Activated CD8-positive, alpha-beta T cell treated with anti-CD3 and anti-CD28 coated beads for 36 hours (primary cell): ENCODE measurements at regions of chr18 and their contacts with region 1.

Region 1: DNA sequence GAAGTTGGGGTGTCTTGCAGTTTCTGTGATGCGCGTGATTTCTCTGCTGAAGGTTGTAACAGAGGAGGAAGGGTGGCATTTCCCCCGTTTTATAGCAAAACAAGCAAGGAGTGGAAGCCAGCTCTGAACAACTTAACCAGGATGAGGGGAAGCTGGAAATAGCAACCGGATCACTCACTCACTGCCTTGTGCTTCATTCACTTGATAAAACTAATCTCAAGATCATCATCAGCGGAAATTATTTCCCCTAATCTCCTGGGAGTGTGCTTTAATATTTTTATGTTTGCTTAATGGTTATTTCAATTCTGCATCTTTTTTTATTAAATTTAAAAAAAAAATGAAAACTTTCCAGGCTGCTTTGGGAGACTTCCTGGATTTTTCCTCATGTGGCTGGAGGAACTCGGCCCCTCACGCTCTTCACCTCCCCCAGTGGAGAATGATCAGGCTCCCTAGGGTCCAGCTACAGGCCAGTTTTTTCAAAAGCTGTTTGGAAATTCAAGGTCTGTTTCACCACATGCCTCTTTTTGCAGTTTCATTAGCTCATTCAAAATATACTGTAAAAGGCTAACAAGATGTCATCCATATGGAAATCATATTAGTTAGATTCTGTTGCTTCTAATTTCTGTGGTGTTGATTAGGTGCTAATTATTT is 31.7 kb downstream of the CABLES1 start:
- DNase-seq: no peak
- ATAC-seq: no peak
- H3K4me3 Mint-ChIP-seq: no peak overlapping the region
- H3K27ac Mint-ChIP-seq: no peak overlapping the region
- H3K4me1 Mint-ChIP-seq: no peaks in the 10 kb centered on the region
- H3K27me3 Mint-ChIP-seq: no peaks in the 10 kb centered on the region
- CTCF ChIP-seq: no peak

Region 2: GRCh38 chr18:23183411-23184155 is 16.6 kb after region 1 on chr18:
- CTCF ChIA-PET with region 1: no interaction called
- POLR2A ChIA-PET with region 1: no interaction called
- intact Hi-C with region 1: no loop called
- DNase-seq: no peak
- ATAC-seq: no peak
- H3K4me3 Mint-ChIP-seq: no peak overlapping the region
- H3K27ac Mint-ChIP-seq: no peak overlapping the region
- H3K4me1 Mint-ChIP-seq: peaks cover 5% of the 10 kb centered on the region
- H3K27me3 Mint-ChIP-seq: no peaks in the 10 kb centered on the region
- CTCF ChIP-seq: no peak

Region 3: DNA sequence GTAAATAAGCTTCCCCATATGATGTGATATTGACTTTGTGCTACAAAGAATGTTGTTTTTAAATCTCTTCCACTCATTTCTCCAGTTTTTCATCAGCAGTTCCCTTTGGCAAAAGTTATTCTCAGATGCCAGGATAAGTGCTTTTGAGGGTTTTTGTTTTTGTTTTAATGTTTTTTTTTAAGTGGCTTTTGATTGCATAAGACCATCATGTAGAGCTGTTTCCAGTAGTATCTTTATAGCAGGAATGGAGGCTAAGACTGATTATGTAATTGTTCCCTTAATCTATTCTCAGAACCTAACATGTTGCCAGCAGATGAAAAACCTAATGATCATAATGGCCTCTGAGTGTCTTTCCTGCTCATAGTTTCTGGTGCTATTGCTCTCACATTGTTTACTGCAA is 46.2 kb after region 1 on chr18:
- CTCF ChIA-PET with region 1: no interaction called
- POLR2A ChIA-PET with region 1: no interaction called
- intact Hi-C with region 1: loop called (anchors 10 kb)
- DNase-seq: no peak
- ATAC-seq: no peak
- H3K4me3 Mint-ChIP-seq: no peak overlapping the region
- H3K27ac Mint-ChIP-seq: no peak overlapping the region
- H3K4me1 Mint-ChIP-seq: peaks cover 19% of the 10 kb centered on the region
- H3K27me3 Mint-ChIP-seq: peaks cover 3% of the 10 kb centered on the region
- CTCF ChIP-seq: no peak